ENCODE measurements at regions of chr14 and their contacts with region 1.

Region 1: DNA sequence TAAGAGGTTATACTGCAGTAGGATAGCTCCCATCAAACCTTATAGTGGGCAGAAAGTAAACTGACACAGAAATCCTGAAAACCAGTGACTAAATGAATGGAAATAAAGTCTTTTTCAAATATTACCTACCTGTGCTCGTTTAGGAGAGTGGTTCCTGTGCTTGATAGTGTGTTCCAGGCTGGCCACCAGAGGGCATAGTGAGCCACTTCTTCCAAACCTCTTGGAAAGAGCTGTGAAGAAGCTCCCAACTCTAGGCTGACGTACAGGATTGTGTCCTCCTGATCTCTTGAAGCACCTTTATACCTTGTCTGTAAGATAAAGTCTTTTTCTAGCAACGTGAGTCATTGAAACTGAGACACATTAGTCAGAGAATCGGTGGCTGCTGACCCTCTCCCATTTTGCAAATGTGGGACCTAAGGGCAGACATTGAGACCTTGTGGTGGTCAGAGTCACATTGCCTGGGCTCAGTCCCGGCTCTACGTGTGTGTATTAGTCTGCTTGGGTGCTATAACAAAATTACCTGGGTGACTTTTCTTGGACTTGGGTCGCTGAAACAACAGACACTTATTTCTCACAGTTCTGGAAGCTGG is 17.6 kb downstream of the TDP1 start:
- DNase-seq: peak; percentile 76
- ATAC-seq: peak; percentile 94
- H3K4me3 Mint-ChIP-seq: no peak overlapping the region
- H3K27ac Mint-ChIP-seq: no peak overlapping the region
- H3K4me1 Mint-ChIP-seq: no peaks in the 10 kb centered on the region
- H3K27me3 Mint-ChIP-seq: no peaks in the 10 kb centered on the region
- CTCF ChIP-seq: peak; percentile 74; the same call in 1 of the 2 replicates

Region 2: GRCh38 chr14:89954070-89955028 is 19.0 kb before region 1 on chr14 and contains the start of gene EFCAB11:
- CTCF ChIA-PET with region 1: interaction called, 18 read pairs
- POLR2A ChIA-PET with region 1: no interaction called
- DNase-seq: peak; percentile 97
- ATAC-seq: peak; percentile 92
- H3K4me3 Mint-ChIP-seq: peak within 1 kb of the TSS; percentile 97
- H3K27ac Mint-ChIP-seq: peak within 1 kb of the TSS; percentile 98
- H3K4me1 Mint-ChIP-seq: peaks cover 33% of the 10 kb centered on the region
- H3K27me3 Mint-ChIP-seq: no peaks in the 10 kb centered on the region
- CTCF ChIP-seq: no peak
- total RNA-seq, gene EFCAB11: 15.5 to 18.8 TPM (median 18.0 TPM) in 3 replicates

Region 3: DNA sequence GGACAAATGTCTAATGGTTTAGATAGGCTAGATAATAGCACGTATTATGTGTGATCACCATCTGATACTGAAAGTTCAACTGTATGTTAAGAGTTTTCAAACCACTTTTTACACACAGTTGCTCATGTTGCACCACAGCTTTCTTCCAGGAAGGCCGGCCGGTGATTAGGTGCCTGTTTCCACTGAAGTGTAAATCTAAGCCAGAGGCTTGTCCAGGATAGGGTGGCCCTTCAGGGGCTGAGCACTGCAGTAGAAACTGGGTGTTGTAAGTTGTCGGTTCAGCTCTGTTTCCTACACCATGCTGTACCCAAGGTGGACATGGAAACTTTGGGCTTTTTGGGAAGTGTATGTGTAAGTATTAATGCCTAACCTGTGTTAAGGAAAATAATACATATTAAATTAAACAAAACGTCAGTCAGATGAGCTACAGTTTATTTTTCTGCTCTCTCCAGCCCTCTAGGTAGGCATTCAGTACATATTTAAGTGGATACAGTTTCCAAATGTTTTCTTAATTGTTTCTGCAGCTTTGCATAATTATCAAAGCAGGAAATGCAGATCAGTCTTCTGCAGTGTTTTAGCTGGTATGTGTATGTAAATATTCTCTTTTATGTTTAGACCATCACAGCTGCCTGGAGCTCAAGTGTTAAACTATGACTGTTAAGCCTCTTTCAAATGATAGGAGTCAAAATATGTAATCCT is 13.3 kb after region 1 on chr14:
- CTCF ChIA-PET with region 1: interaction called, 52 read pairs
- POLR2A ChIA-PET with region 1: no interaction called
- DNase-seq: no peak
- ATAC-seq: peak; percentile 66
- H3K4me3 Mint-ChIP-seq: peak overlapping the region; percentile 22
- H3K27ac Mint-ChIP-seq: peak overlapping the region; percentile 78
- H3K4me1 Mint-ChIP-seq: peaks cover 41% of the 10 kb centered on the region
- H3K27me3 Mint-ChIP-seq: no peaks in the 10 kb centered on the region
- CTCF ChIP-seq: no peak

Region 4: GRCh38 chr14:90005939-90006530 is 32.7 kb after region 1 on chr14:
- CTCF ChIA-PET with region 1: no interaction called
- POLR2A ChIA-PET with region 1: no interaction called
- DNase-seq: no peak
- ATAC-seq: no peak
- H3K4me3 Mint-ChIP-seq: no peak overlapping the region
- H3K27ac Mint-ChIP-seq: no peak overlapping the region
- H3K4me1 Mint-ChIP-seq: no peaks in the 10 kb centered on the region
- H3K27me3 Mint-ChIP-seq: no peaks in the 10 kb centered on the region
- CTCF ChIP-seq: no peak

Region 5: DNA sequence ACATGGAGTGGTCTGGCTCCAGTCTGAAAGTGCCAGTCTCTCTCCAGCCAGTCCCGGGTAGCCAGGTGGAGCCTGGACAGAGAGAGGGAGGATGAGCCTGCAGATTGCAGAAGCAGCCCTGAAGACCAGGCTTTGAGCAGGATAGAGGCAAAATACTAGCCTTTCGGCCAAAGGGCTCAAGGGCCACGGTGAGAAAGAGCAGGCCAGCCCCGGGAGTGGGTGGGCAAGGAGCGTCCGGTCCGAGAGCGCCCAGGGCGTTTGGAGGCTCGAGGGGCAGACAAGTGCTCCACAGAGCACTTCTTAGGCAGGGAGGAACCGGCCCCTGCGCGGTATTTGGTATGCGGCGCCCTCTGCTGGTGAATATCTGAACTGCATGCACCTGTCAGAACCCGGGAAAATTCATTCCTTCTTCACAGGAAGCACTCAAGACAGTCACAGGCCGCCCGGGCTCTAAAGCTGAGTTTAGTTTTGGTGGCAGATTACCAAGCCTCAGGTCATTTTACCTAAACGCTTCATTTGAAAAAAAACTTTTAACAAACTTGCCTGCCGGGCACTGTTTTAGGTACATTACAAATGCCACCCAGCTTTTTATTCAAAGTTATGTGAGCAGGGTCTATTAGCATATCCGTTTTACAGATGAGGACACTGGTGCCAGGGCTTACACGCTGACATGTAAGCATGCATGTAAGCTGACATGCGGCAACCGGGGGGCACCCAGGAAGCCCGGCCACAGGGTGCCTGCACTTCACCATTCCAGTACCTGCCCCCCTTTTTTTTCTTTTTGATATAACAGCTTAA is 262.0 kb after region 1 on chr14:
- CTCF ChIA-PET with region 1: interaction called, 14 read pairs
- POLR2A ChIA-PET with region 1: no interaction called
- DNase-seq: peak; percentile 89
- ATAC-seq: peak; percentile 96
- H3K4me3 Mint-ChIP-seq: no peak overlapping the region
- H3K27ac Mint-ChIP-seq: no peak overlapping the region
- H3K4me1 Mint-ChIP-seq: no peaks in the 10 kb centered on the region
- H3K27me3 Mint-ChIP-seq: peaks cover 71% of the 10 kb centered on the region
- CTCF ChIP-seq: peak; percentile 99

Measured in WTC11 (cell line).